Activated T-helper 1 cell treated with anti-CD3 and anti-CD28 coated beads, Interleukin-12 subunit alpha, Interleukin-12 subunit beta, Interleukin-2, Interleukin-4 antibody, amounts not matched to agents 30 ng/mL and 10 ng/mL and 1 ng/mL, durations not matched to agents 14 hours and 24 hours and 36 hours (primary cell): ENCODE measurements at regions of chr14 and their contacts with region 1.

Region 1: GRCh38 chr14:24442273-24443052 is at the start of gene SDR39U1:
- DNase-seq: peak; percentile 97
- H3K4me3 Mint-ChIP-seq: peak within 1 kb of the TSS; percentile 92
- H3K27ac Mint-ChIP-seq: peak within 1 kb of the TSS; percentile 91
- H3K4me1 Mint-ChIP-seq: peaks cover 45% of the 10 kb centered on the region
- H3K27me3 Mint-ChIP-seq: no peaks in the 10 kb centered on the region
- total RNA-seq, gene SDR39U1: 41.5 and 48.0 TPM in 2 replicates

Region 2: GRCh38 chr14:23469127-23469905 is 973.1 kb before region 1 on chr14 and contains the start of gene NGDN:
- intact Hi-C with region 1: loop called (anchors 1 kb)
- DNase-seq: peak; percentile 89
- H3K4me3 Mint-ChIP-seq: no peak within 1 kb of the TSS
- H3K27ac Mint-ChIP-seq: peak within 1 kb of the TSS; percentile 45
- H3K4me1 Mint-ChIP-seq: peaks cover 11% of the 10 kb centered on the region
- H3K27me3 Mint-ChIP-seq: peaks cover 2% of the 10 kb centered on the region
- total RNA-seq, gene NGDN: 80.1 and 84.5 TPM in 2 replicates

Region 3: GRCh38 chr14:24146978-24147760 is 295.3 kb before region 1 on chr14 and contains the start of gene RNF31:
- intact Hi-C with region 1: loop called (anchors 1 kb)
- DNase-seq: peak; percentile 97
- H3K4me3 Mint-ChIP-seq: peak within 1 kb of the TSS; percentile 94
- H3K27ac Mint-ChIP-seq: peak within 1 kb of the TSS; percentile 98
- H3K4me1 Mint-ChIP-seq: peaks cover 62% of the 10 kb centered on the region
- H3K27me3 Mint-ChIP-seq: no peaks in the 10 kb centered on the region
- total RNA-seq, gene RNF31: 115 and 129 TPM in 2 replicates

Region 4: DNA sequence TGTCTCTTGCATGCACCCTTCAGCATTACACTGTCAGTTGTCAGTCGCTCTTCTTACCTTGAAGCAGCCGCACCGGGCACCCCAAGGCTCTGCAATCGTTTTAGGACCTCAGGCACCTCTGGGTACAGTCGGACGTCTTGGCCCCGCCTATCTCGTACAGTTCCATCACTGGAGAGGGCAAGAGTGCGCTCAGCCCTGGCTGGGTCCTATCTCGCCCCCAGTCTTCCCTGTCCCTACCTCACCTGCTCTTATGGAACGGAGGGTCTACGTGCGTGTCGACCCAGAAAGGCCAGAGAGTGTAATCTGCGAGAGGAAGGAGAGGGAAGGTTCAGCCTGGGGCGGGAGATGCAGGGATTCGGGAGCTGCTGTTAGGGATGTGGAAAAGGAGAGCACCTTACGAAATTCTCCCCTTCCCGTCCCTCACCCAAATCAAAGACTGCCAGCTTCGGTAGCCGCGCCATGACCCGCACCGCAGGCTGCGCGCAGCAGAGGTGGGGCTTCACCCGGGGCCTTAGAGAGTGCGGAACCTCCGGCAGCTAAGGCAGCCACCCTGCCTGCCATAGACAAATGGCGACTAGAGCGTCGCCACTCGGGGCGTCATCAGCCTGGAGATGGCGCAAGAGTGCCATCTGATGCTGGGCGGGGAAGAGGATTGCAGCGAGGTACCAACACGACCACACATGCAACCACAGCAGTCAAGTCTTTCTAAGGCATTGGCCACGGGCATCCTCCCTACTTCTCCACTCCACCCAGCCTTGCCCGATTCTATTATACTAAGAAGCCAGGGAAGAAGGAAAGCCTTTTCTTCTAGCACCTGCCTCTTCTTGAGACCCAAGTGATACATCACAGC is 226.7 kb before region 1 on chr14 and contains the start of gene MDP1:
- intact Hi-C with region 1: loop called (anchors 1 kb)
- DNase-seq: peak; percentile 85
- H3K4me3 Mint-ChIP-seq: peak within 1 kb of the TSS; percentile 90
- H3K27ac Mint-ChIP-seq: peak within 1 kb of the TSS; percentile 96
- H3K4me1 Mint-ChIP-seq: peaks cover 43% of the 10 kb centered on the region
- H3K27me3 Mint-ChIP-seq: no peaks in the 10 kb centered on the region
- total RNA-seq, gene MDP1: 11.6 and 12.9 TPM in 2 replicates

Region 5: GRCh38 chr14:24241829-24242443 is 200.5 kb before region 1 on chr14:
- intact Hi-C with region 1: loop called (anchors 1 kb)
- DNase-seq: peak; percentile 93
- H3K4me3 Mint-ChIP-seq: peak overlapping the region; percentile 96
- H3K27ac Mint-ChIP-seq: peak overlapping the region; percentile 99
- H3K4me1 Mint-ChIP-seq: peaks cover 58% of the 10 kb centered on the region
- H3K27me3 Mint-ChIP-seq: no peaks in the 10 kb centered on the region

Region 6: GRCh38 chr14:24321212-24321975 is 121.1 kb before region 1 on chr14:
- intact Hi-C with region 1: no loop called
- DNase-seq: no peak
- H3K4me3 Mint-ChIP-seq: no peak overlapping the region
- H3K27ac Mint-ChIP-seq: no peak overlapping the region
- H3K4me1 Mint-ChIP-seq: peaks cover 12% of the 10 kb centered on the region
- H3K27me3 Mint-ChIP-seq: peaks cover 7% of the 10 kb centered on the region

Region 7: DNA sequence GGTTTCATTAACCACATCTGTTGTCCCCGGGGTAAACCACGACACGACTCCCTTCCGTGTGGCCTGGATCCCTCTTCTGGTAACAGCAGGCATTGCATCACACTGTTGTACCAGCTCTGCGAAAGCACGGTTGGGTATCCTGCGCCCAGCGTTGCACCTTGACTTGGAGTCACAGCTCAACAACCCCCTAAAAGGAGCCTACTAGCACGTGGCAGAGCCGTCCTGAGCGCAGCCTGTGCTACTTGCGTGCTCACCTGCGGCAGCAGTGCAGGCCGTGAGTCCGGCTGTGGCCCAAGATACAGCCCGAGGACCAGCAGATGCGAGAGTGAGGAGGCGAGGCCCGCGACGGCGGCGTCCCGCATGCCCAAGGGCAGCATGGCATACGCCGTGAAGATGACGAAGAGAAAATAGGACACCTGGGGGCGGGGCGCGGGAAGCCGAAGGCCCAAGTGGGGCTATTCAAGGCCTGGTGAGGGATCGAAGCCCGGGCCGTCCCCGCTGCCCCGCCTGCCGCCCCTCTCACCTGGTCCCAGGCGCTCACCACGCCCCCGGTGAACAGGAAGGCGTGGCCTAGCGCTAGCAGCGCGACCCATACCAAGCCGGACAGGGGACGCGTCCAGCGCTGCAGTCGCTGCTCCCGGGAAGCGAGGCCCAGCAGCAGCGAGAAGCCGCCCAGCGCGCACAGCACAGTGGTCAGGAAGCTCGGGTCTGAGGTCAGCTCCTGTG is 110.0 kb before region 1 on chr14:
- intact Hi-C with region 1: loop called (anchors 1 kb)
- DNase-seq: peak; percentile 79
- H3K4me3 Mint-ChIP-seq: peak overlapping the region; percentile 80
- H3K27ac Mint-ChIP-seq: peak overlapping the region; percentile 27
- H3K4me1 Mint-ChIP-seq: peaks cover 58% of the 10 kb centered on the region
- H3K27me3 Mint-ChIP-seq: peaks cover 29% of the 10 kb centered on the region

Region 8: DNA sequence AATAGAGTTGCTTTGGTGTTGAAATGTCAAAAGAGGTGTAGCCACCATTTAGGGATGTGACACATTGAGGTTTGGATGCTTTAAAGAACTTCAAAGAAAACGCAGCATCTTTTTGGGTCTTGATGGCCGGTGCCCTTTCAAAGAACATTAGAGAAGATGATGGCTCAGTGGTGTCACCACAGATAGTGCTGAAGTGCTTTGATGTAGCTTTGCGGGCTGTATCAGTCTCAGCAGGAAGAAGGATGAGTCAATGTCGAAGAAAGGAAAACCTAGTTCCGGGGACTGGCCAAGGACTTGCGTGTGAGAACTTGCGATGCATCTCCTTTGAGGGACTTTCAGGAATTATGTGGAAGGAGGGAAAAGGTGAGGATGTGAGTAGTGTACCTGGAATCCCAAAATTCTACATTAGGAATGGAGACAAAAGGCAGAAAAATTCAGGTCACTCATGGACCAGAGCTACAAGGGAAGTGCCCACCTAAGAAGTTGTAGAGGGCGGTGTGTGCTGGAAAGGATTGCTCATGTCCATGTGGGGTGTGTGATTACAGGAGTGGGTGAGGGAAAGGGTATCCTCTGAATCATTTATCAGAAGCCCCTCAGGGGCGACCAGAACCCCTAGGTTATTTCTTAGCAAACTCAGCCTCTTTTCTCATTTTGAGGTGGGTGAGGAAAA is 231.2 kb after region 1 on chr14:
- intact Hi-C with region 1: loop called (anchors 1 kb)
- DNase-seq: peak; percentile 74
- H3K4me3 Mint-ChIP-seq: peak overlapping the region; percentile 77
- H3K27ac Mint-ChIP-seq: peak overlapping the region; percentile 98
- H3K4me1 Mint-ChIP-seq: peaks cover 89% of the 10 kb centered on the region
- H3K27me3 Mint-ChIP-seq: no peaks in the 10 kb centered on the region

Region 9: GRCh38 chr14:25400607-25401206 is 958.2 kb after region 1 on chr14:
- intact Hi-C with region 1: no loop called
- DNase-seq: no peak
- H3K4me3 Mint-ChIP-seq: no peak overlapping the region
- H3K27ac Mint-ChIP-seq: no peak overlapping the region
- H3K4me1 Mint-ChIP-seq: no peaks in the 10 kb centered on the region
- H3K27me3 Mint-ChIP-seq: no peaks in the 10 kb centered on the region